ENCODE measurements at regions of chr14 and their contacts with region 1.

Region 1: DNA sequence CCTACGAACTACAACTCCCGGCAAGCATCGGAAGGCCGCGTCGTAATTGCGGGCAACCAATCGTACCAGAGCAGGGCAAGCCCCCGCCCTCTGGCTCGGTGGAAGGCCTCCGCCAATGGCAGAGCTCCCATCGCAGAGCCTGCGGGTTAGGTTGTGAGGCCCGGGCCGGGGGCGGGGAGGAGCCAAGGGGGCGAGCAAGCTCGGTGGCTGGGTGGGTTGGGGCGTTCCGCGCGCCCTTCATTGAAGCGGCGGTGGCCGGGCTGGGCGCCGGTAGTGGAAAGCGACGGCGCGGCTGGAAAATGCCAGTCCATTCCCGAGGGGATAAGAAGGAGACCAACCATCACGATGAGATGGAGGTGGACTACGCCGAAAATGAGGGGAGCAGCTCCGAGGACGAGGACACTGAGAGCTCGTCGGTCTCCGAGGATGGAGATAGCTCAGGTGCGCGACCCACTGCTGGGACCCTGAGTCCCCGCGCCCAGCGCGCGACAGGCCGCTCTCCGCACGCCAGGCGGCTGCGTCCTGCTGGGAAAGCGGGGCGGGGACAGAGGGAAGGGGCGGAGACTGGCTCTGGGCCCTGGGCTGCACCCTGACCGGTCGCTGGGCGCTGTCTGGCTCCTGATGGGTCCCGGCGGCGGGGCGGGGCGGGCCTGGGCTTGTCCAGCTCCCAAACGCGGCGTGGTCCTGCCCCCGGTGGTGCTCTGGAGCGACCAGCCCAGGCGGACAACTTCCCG is at the start of gene BRMS1L:
- DNase-seq: peak; percentile 99
- ATAC-seq: peak; percentile 97
- H3K4me3 ChIP-seq: peak within 1 kb of the TSS; percentile 81
- H3K27ac ChIP-seq: peak within 1 kb of the TSS; percentile 95
- H3K4me1 ChIP-seq: no peaks in the 10 kb centered on the region
- H3K27me3 ChIP-seq: no peaks in the 10 kb centered on the region
- CTCF ChIP-seq: no peak
- POLR2A ChIP-seq: peak; percentile 78
- RAD21 ChIP-seq: no peak
- total RNA-seq, gene BRMS1L: 1.8 and 5.0 TPM in 2 replicates

Region 2: DNA sequence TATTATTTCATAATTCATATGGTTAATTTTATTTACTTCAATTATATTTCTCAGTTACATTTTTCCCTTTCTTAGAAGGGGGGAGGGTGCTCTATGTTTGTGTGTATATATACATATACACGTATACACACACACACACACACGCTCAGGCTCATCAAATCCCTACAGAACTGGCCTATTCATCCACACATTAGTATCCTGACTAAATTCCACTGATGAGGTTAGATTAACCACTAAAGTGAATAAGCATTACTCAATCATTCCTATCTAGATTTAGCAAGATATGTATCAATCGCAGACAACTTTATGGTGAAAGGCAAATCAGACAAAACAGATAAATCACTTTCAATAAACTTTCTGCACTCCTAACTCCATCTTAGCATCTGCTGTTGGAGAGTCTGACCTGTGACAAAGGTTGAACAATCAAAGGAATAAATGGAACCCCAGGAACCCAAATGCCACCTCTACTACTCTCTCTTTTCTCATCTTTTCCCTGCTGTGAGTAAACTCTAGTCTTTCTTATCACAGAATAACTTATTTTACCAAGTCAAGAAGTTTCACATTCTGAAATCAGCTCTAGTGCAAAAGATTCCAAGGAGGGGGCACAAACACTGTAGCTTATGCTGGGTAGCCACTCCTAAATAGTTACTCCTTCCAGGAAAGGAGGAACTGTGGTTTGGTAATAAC is 84.9 kb before region 1 on chr14:
- CTCF ChIA-PET with region 1: interaction called, 4 read pairs
- POLR2A ChIA-PET with region 1: interaction called, 19 read pairs
- dilution Hi-C with region 1: no loop called
- in situ Hi-C with region 1: no loop called
- intact Hi-C with region 1: no loop called
- DNase-seq: no peak
- ATAC-seq: no peak
- H3K4me3 ChIP-seq: no peak overlapping the region
- H3K27ac ChIP-seq: no peak overlapping the region
- H3K4me1 ChIP-seq: 0 out of 2 replicates have a peak, but pooled peaks cover 2% of the 10 kb centered on the region
- H3K27me3 ChIP-seq: no peaks in the 10 kb centered on the region
- CTCF ChIP-seq: no peak
- POLR2A ChIP-seq: no peak
- RAD21 ChIP-seq: no peak

Region 3: DNA sequence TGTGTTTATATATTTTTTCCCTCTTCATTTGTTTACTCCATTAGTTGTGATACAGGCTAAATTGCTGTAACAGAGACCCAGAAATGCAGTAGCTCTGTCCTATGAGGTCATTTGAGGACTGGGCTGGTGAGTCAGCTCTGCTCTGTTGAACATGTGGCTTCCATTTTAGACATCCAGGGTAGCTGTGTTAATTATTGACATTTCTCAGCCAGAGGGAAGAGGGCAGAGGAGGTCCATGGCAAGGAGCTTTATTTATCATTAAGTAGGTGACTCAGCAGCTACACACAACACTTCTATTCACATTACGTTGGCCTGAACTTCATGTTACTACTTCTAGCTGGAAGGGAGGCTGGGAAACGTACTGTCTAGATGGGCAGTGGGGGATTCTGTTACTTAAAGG is 264.7 kb after region 1 on chr14:
- CTCF ChIA-PET with region 1: no interaction called
- POLR2A ChIA-PET with region 1: no interaction called
- dilution Hi-C with region 1: no loop called
- in situ Hi-C with region 1: no loop called
- intact Hi-C with region 1: loop called (anchors 5 kb)
- DNase-seq: peak; percentile 93
- ATAC-seq: peak; percentile 98
- H3K4me3 ChIP-seq: no peak overlapping the region
- H3K27ac ChIP-seq: peak overlapping the region; percentile 60; the same call in 1 of the 2 replicates
- H3K4me1 ChIP-seq: no peaks in the 10 kb centered on the region; the same call in 1 of the 2 replicates
- H3K27me3 ChIP-seq: no peaks in the 10 kb centered on the region
- CTCF ChIP-seq: no peak
- POLR2A ChIP-seq: no peak
- RAD21 ChIP-seq: peak; percentile 13; the same call in 1 of the 2 replicates